PC-3 (cell line): ENCODE measurements at regions of chr1 and their contacts with region 1.

Region 1: DNA sequence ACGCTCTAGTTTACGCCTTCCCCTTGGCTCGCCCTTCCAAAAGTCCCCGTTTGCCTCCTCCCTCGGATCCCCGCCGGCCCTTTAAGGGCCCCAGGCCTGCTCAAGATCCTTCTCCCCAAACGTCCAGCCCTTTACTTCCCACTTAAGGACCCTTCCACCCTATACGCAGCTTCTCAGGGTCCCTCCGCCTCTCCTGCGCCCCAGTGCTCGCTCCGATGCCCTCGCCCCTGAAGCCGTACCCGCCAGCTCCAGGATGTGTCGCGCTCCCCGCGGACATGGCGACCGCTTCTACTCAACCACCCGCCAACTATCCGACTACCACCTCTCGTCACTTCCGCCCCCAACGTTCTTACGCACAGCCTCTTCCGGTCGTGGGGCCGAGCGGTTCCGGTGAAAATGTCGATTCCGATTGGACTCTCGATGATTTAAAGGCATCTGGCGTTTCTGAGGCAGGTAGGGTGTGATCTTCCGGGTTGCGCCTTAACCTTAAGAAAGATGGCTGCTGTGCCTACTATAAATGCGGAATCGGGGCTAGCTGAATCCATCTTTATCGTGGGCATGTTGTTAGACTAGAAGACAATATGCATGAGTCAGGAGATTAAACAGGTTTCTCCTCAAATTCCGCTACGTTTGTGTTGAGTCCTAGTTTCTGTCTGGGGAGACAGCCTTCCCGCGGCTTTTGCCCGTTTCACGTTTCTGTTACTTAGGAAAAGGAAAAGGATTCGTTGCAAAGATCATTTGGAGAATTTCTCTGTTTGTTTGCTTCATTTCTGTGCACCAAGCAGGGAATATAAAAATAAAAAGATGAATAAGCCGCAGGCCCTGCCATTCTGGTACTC is at the start of gene KHDC4:
- DNase-seq: peak; percentile 100
- ATAC-seq: peak; percentile 76
- H3K4me3 ChIP-seq: peak within 1 kb of the TSS; percentile 80
- H3K27ac ChIP-seq: peak within 1 kb of the TSS; percentile 79
- H3K4me1 ChIP-seq: peaks cover 40% of the 10 kb centered on the region
- H3K27me3 ChIP-seq: no peaks in the 10 kb centered on the region
- CTCF ChIP-seq: no peak
- total RNA-seq, gene KHDC4: 63.4 and 64.4 TPM in 2 replicates

Region 2: GRCh38 chr1:155744711-155745283 is 189.5 kb before region 1 on chr1:
- CTCF ChIA-PET with region 1: no interaction called
- POLR2A ChIA-PET with region 1: no interaction called
- intact Hi-C with region 1: loop called (anchors 5 kb)
- DNase-seq: peak; percentile 21
- ATAC-seq: no peak; the same call in 1 of the 2 replicates
- H3K4me3 ChIP-seq: peak overlapping the region; percentile 70
- H3K27ac ChIP-seq: peak overlapping the region; percentile 37
- H3K4me1 ChIP-seq: 0 out of 2 replicates have a peak, but pooled peaks cover 4% of the 10 kb centered on the region
- H3K27me3 ChIP-seq: no peaks in the 10 kb centered on the region
- CTCF ChIP-seq: no peak

Region 3: DNA sequence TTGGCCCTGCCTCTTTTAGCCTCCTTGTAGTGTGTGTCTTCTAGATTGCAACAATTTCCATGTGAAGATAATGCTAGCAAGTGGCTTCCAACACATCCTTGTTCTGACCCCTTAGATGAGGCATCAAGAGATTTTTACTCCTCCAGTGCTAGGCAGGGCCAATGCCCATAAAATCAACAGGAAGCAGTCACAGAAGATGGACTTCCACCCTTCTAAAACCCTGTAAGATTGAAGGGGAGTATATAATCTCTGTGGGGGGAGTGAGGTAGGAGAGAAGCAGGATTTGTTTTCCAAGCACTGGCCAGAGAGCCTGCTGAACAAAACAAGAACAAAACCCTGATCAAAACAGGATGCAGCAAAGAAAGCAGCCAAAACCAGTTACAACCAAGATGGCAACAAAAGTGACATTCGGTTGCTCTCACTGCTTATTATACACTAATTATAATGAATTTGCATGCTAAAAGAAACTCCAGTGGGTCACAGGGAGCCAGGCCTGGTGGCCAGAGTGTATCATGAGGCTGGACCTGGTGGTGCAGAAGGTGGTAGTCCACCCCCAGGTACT is 89.4 kb before region 1 on chr1:
- CTCF ChIA-PET with region 1: no interaction called
- POLR2A ChIA-PET with region 1: no interaction called
- intact Hi-C with region 1: no loop called
- DNase-seq: no peak
- ATAC-seq: no peak
- H3K4me3 ChIP-seq: no peak overlapping the region
- H3K27ac ChIP-seq: no peak overlapping the region
- H3K4me1 ChIP-seq: no peaks in the 10 kb centered on the region
- H3K27me3 ChIP-seq: no peaks in the 10 kb centered on the region
- CTCF ChIP-seq: no peak

Region 4: DNA sequence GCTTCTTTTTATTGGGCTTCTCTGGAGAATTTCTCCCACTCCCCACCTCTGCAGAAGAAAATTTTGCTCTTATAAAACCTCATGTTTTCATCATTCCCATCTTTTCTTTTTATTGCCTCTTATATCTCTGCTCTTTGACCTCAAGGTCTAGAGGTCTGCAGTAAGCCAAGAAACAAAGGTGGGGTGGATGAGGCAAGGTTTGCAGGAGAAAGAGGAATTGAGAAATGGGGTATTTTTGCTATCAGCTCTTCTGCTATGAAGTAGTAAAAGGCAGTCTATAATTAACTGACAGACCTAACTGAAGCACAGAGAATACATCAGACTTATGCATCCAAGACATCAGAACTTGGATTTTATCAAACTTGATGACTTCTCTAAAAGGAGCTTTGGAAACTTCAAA is 52.1 kb before region 1 on chr1:
- CTCF ChIA-PET with region 1: no interaction called
- POLR2A ChIA-PET with region 1: no interaction called
- intact Hi-C with region 1: no loop called
- DNase-seq: no peak
- ATAC-seq: no peak
- H3K4me3 ChIP-seq: no peak overlapping the region
- H3K27ac ChIP-seq: no peak overlapping the region
- H3K4me1 ChIP-seq: peaks cover 10% of the 10 kb centered on the region
- H3K27me3 ChIP-seq: no peaks in the 10 kb centered on the region
- CTCF ChIP-seq: no peak

Region 5: GRCh38 chr1:155893389-155894142 is 40.8 kb before region 1 on chr1:
- CTCF ChIA-PET with region 1: interaction called, 3 read pairs
- POLR2A ChIA-PET with region 1: interaction called, 4 read pairs
- intact Hi-C with region 1: loop called (anchors 2 kb)
- DNase-seq: peak; percentile 97
- ATAC-seq: peak; percentile 86
- H3K4me3 ChIP-seq: peak overlapping the region; percentile 46
- H3K27ac ChIP-seq: peak overlapping the region; percentile 91
- H3K4me1 ChIP-seq: peaks cover 30% of the 10 kb centered on the region
- H3K27me3 ChIP-seq: no peaks in the 10 kb centered on the region
- CTCF ChIP-seq: no peak

Region 6: GRCh38 chr1:155961937-155962336 is 27.6 kb after region 1 on chr1:
- CTCF ChIA-PET with region 1: interaction called, 4 read pairs
- POLR2A ChIA-PET with region 1: no interaction called
- intact Hi-C with region 1: loop called (anchors 1 kb)
- DNase-seq: peak; percentile 100
- ATAC-seq: peak; percentile 98
- H3K4me3 ChIP-seq: 0 out of 2 replicates have a peak overlapping the region, but pooled peaks have one; percentile 5
- H3K27ac ChIP-seq: peak overlapping the region; percentile 93
- H3K4me1 ChIP-seq: peaks cover 32% of the 10 kb centered on the region
- H3K27me3 ChIP-seq: no peaks in the 10 kb centered on the region
- CTCF ChIP-seq: peak; percentile 52

Region 7: DNA sequence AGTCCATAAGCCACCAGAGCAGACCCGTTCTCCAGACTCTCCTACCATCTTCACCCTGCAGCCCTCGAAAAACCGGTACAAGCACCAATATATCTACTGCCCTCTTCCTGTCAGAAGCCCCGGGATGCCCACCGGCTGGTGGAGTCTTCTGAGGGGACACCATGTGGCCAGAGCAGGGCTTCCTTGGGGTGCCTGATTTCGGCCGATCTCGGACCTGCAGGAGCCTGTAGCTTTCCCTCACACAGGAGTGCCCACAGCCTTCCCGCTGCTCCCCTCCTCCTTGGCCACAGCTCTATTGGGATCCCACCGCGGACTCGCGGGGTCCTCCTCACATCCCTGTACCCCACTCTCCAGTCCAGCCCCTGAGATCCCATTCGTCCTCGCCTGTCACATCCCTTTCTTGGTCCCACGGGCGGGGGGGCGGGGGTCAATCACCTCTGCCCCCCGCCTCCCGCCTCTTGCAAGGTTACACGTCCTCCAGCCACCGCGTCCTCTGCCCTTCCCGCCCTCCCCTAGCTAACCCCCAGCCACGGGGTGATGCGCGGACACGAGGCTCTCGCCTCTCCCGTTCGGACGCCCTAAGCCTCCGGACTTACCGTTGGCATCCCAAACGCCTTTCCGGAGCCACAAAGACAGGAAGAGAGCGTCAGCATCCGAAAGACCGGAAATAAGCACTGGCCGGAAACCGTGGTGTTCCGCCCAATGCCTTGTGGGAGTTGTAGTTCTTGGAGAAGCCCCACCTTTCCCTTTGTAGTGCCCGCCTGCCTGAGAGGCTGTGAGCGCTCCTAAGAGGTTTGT is 86.2 kb after region 1 on chr1 and contains the start of gene SSR2:
- CTCF ChIA-PET with region 1: no interaction called
- POLR2A ChIA-PET with region 1: no interaction called
- intact Hi-C with region 1: loop called (anchors 1 kb)
- DNase-seq: peak; percentile 98
- ATAC-seq: peak; percentile 98
- H3K4me3 ChIP-seq: peak within 1 kb of the TSS; percentile 75
- H3K27ac ChIP-seq: no peak within 1 kb of the TSS
- H3K4me1 ChIP-seq: peaks cover 6% of the 10 kb centered on the region; the same call in 1 of the 2 replicates
- H3K27me3 ChIP-seq: no peaks in the 10 kb centered on the region
- CTCF ChIP-seq: no peak
- total RNA-seq, gene SSR2: 282 and 293 TPM in 2 replicates

Region 8: DNA sequence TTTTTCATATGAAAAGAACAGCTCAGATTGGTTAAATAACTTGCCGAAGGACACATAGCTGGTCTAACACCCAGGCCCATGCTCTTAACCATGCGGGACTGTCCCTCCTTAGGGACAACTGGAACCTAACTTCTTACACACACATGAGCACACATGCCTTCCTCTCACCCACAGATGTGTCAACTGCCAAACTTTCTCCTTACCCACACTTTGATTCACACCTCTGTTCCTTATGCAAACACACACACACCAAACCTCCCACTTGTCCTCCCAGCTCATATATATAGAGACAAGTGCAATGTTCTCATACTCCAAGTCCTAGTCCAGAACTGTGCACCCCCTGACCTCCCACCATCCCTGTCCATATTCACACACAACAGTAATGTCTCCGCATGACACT is 130.9 kb after region 1 on chr1:
- CTCF ChIA-PET with region 1: interaction called, 6 read pairs
- POLR2A ChIA-PET with region 1: no interaction called
- intact Hi-C with region 1: loop called (anchors 1 kb)
- DNase-seq: no peak
- ATAC-seq: no peak
- H3K4me3 ChIP-seq: no peak overlapping the region
- H3K27ac ChIP-seq: no peak overlapping the region
- H3K4me1 ChIP-seq: peaks cover 10% of the 10 kb centered on the region; the same call in 1 of the 2 replicates
- H3K27me3 ChIP-seq: no peaks in the 10 kb centered on the region
- CTCF ChIP-seq: no peak